Activated CD4-positive, alpha-beta memory T cell treated with anti-CD3 and anti-CD28 coated beads, Interleukin-2, amount 10 ng/mL, durations not matched to agents 7 days and 5 days (primary cell): ENCODE measurements at regions of chr6 and their contacts with region 1.

Region 1: GRCh38 chr6:35688581-35689322 is at the start of gene FKBP5:
- DNase-seq: peak; percentile 91
- H3K4me3 Mint-ChIP-seq: peak within 1 kb of the TSS; percentile 90
- H3K27ac Mint-ChIP-seq: peak within 1 kb of the TSS; percentile 82
- H3K4me1 Mint-ChIP-seq: peaks cover 15% of the 10 kb centered on the region
- H3K27me3 Mint-ChIP-seq: no peaks in the 10 kb centered on the region
- total RNA-seq, gene FKBP5: 51.1 to 51.5 TPM

Region 2: GRCh38 chr6:35669451-35670045 is 19.2 kb before region 1 on chr6:
- CTCF ChIA-PET with region 1: interaction called, 7 read pairs
- POLR2A ChIA-PET with region 1: interaction called, 10 read pairs
- DNase-seq: no peak
- H3K4me3 Mint-ChIP-seq: peak overlapping the region; percentile 75
- H3K27ac Mint-ChIP-seq: peak overlapping the region; percentile 90
- H3K4me1 Mint-ChIP-seq: peaks cover 56% of the 10 kb centered on the region
- H3K27me3 Mint-ChIP-seq: no peaks in the 10 kb centered on the region

Region 3: GRCh38 chr6:35725721-35726438 is 37.1 kb after region 1 on chr6:
- CTCF ChIA-PET with region 1: interaction called, 11 read pairs
- POLR2A ChIA-PET with region 1: interaction called, 36 read pairs
- DNase-seq: no peak
- H3K4me3 Mint-ChIP-seq: no peak overlapping the region
- H3K27ac Mint-ChIP-seq: peak overlapping the region; percentile 85
- H3K4me1 Mint-ChIP-seq: peaks cover 60% of the 10 kb centered on the region
- H3K27me3 Mint-ChIP-seq: no peaks in the 10 kb centered on the region

Region 4: DNA sequence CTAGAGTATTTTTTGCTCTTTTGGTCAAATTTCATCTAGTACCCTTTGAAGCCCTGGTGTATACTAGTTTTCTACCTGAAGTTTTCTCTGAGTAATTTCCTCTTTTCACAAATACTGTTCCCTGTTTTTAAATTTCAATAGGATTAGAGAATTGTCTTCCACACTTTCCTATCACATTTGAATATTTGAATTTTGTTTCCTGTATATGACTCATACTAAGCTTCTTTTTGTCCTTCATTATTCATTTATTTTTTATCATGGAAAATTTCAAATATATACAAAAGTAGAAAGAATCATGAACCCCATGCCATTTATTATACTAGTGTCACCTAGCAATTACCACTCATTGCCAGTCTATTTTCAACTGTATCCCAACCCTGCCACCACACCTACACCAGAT is 169.1 kb after region 1 on chr6:
- CTCF ChIA-PET with region 1: no interaction called
- POLR2A ChIA-PET with region 1: no interaction called
- DNase-seq: no peak
- H3K4me3 Mint-ChIP-seq: no peak overlapping the region
- H3K27ac Mint-ChIP-seq: no peak overlapping the region
- H3K4me1 Mint-ChIP-seq: peaks cover 2% of the 10 kb centered on the region
- H3K27me3 Mint-ChIP-seq: no peaks in the 10 kb centered on the region